ENCODE measurements at regions of chr3 and their contacts with region 1.

Region 1: GRCh38 chr3:132038198-132038825 is 3.5 kb upstream of the CPNE4 start:
- DNase-seq: peak in 2 of 3 donors; percentile 21 to 33
- H3K4me3 ChIP-seq: no peak overlapping the region
- H3K27ac ChIP-seq: no peak overlapping the region
- H3K4me1 ChIP-seq: peaks cover 0 to 13% (median 7%) of the 10 kb centered on the region in 4 experiments
- H3K27me3 ChIP-seq: peaks cover 2 to 33% (median 13%) of the 10 kb centered on the region in 5 experiments

Region 2: DNA sequence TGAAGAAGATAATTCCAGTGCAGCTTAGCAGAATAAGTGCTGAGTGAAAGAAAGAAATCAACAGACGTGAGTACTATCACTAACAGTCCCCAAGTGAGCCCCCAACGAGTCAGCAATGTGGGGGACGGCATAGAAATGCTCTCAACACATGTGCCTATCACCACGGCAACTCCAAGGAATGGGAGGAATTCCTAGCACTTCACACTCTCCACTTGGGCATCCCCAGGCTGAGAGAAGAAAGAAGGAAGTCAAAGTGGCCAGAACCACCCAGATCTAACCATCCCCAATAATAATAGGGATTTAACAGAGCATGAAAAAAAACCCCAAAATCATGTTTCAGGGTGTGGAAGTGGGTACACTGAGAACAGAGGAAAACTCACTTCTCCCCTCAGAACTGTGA is 25.8 kb after region 1 on chr3:
- CTCF ChIA-PET with region 1: no interaction called
- POLR2A ChIA-PET with region 1: no interaction called
- DNase-seq: no peak
- H3K4me3 ChIP-seq: no peak overlapping the region
- H3K27ac ChIP-seq: no peak overlapping the region
- H3K4me1 ChIP-seq: no peaks in the 10 kb centered on the region
- H3K27me3 ChIP-seq: peaks cover 0 to 3% (median 0%) of the 10 kb centered on the region in 5 experiments

Region 3: DNA sequence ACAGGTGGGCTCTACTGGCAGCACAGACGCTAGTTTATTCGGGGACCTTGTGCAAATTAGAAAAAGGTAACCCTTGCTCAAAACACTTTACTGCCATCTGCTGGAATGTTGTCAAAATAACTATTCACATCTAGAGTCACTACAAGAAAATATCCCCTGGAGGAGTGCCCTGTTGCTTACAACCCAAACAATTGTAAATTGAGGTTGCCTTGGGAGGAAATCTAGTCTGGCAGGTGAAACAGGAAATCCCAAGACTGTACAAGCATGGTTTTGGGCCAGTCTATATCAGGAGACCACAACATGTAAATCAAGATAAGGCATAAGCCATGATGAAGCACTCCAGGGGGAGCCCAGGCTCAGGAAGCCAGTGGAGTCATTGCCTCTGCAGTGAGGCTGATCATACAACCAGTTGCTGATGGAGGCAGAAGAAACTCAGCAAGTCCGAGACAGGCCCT is 142.1 kb after region 1 on chr3:
- CTCF ChIA-PET with region 1: interaction called, 15 read pairs
- POLR2A ChIA-PET with region 1: interaction called, 3 read pairs
- DNase-seq: peak; percentile 82 to 93 (median 89)
- H3K4me3 ChIP-seq: peak overlapping the region in 1 of 7 experiments; percentile 34
- H3K27ac ChIP-seq: no peak overlapping the region
- H3K4me1 ChIP-seq: peaks cover 0 to 14% (median 5%) of the 10 kb centered on the region in 4 experiments
- H3K27me3 ChIP-seq: peaks cover 0 to 6% (median 0%) of the 10 kb centered on the region in 5 experiments

Measured in common myeloid progenitor, CD34-positive (primary cell).